GM12878 (cell line): ENCODE measurements at regions of chr2 and their contacts with region 1.

Region 1: GRCh38 chr2:150601280-150602038 is 114.0 kb upstream of the RND3 start:
- DNase-seq: no peak
- ATAC-seq: no peak; the same call in 2 of the 3 replicates
- H3K4me3 ChIP-seq: no peak overlapping the region
- H3K27ac ChIP-seq: no peak overlapping the region
- H3K4me1 ChIP-seq: no peaks in the 10 kb centered on the region
- H3K27me3 ChIP-seq: no peaks in the 10 kb centered on the region
- CTCF ChIP-seq: no peak
- EP300 ChIP-seq: no peak
- POLR2A ChIP-seq: no peak
- RAD21 ChIP-seq: no peak

Region 2: DNA sequence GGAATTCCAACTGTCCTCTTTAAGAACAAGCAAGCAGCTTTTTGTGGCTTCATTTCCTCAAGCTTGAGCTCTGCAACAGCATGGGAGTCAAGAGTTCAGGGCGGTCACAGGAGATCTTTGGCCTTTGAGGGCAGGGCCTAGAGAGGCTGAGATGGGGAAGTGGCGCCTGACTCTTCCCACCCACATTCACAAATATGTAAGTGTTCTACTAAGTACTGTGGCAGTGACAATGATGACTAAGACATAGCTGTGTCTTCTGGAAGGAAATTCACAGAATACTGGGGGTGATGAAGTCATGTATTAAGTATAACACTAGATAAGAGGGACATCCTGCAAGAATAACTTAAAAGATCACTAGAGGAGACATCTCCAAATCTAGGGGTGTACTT is 129.0 kb before region 1 on chr2:
- CTCF ChIA-PET with region 1: interaction called, 15 read pairs
- POLR2A ChIA-PET with region 1: interaction called, 3 read pairs
- RAD21 ChIA-PET with region 1: interaction called, 9 read pairs
- SMC1A ChIA-PET with region 1: interaction called, 10 read pairs
- in situ Hi-C with region 1: no loop called
- intact Hi-C with region 1: no loop called
- DNase-seq: no peak
- ATAC-seq: peak; percentile 85
- H3K4me3 ChIP-seq: no peak overlapping the region
- H3K27ac ChIP-seq: no peak overlapping the region
- H3K4me1 ChIP-seq: no peaks in the 10 kb centered on the region
- H3K27me3 ChIP-seq: no peaks in the 10 kb centered on the region; a peak in 1 of 4 replicates
- CTCF ChIP-seq: no peak
- EP300 ChIP-seq: peak in 1 of 2 experiments; percentile 26; a peak in 1 of 4 replicates
- POLR2A ChIP-seq: no peak
- RAD21 ChIP-seq: no peak

Region 3: DNA sequence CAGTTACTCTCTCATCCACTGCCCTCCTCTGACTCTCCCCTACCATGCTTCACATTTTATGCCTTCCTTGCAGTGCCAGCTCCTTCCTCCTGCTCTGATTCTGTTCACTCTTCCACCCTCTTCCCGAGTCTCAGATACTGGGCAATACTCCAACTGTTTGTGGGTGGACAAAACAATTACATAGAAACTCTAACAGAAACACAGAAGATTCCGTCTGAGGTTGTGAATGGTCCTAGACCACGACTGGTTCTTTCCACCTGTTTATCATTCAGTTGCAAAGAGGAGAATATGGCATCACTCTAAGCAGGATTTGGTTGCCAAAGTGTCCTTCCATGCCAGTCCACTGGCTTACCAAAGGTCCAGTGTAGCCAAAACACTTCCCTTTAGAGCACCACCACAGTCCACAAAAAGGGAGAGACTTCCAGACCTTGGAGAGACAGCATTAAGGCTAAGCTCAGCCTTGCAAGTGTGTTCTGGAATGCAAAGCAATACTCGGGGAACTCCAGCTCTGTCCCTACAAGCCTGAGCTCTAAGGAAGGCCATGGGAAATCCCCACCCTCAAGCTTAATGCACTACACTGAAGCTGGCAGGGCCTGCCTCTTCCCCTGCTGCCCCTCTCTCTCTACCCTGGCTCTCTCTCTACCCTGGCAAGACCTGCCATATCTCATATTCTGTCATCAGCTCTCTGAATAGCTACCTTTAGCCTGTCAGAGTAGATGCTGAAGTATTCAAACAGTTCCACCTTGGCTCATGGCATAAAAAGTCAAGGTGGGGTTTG is 80.4 kb before region 1 on chr2:
- CTCF ChIA-PET with region 1: interaction called, 29 read pairs
- POLR2A ChIA-PET with region 1: interaction called, 4 read pairs
- RAD21 ChIA-PET with region 1: interaction called, 40 read pairs
- SMC1A ChIA-PET with region 1: interaction called, 49 read pairs
- in situ Hi-C with region 1: no loop called
- intact Hi-C with region 1: no loop called
- DNase-seq: no peak
- ATAC-seq: peak; percentile 89
- H3K4me3 ChIP-seq: no peak overlapping the region
- H3K27ac ChIP-seq: no peak overlapping the region
- H3K4me1 ChIP-seq: no peaks in the 10 kb centered on the region
- H3K27me3 ChIP-seq: no peaks in the 10 kb centered on the region
- CTCF ChIP-seq: no peak
- EP300 ChIP-seq: no peak
- POLR2A ChIP-seq: no peak
- RAD21 ChIP-seq: no peak

Region 4: GRCh38 chr2:150548527-150548926 is 52.9 kb before region 1 on chr2:
- CTCF ChIA-PET with region 1: interaction called, 21 read pairs
- POLR2A ChIA-PET with region 1: interaction called, 3 read pairs
- RAD21 ChIA-PET with region 1: interaction called, 4 read pairs
- SMC1A ChIA-PET with region 1: interaction called, 22 read pairs
- in situ Hi-C with region 1: no loop called
- intact Hi-C with region 1: no loop called
- DNase-seq: no peak
- ATAC-seq: peak; percentile 80
- H3K4me3 ChIP-seq: no peak overlapping the region
- H3K27ac ChIP-seq: no peak overlapping the region
- H3K4me1 ChIP-seq: no peaks in the 10 kb centered on the region
- H3K27me3 ChIP-seq: no peaks in the 10 kb centered on the region
- CTCF ChIP-seq: peak; percentile 38 to 41 (median 38); a peak in 4 of 6 replicates
- EP300 ChIP-seq: no peak
- POLR2A ChIP-seq: no peak
- RAD21 ChIP-seq: 0 out of 2 replicates have a peak, but pooled peaks have one; percentile 6

Region 5: DNA sequence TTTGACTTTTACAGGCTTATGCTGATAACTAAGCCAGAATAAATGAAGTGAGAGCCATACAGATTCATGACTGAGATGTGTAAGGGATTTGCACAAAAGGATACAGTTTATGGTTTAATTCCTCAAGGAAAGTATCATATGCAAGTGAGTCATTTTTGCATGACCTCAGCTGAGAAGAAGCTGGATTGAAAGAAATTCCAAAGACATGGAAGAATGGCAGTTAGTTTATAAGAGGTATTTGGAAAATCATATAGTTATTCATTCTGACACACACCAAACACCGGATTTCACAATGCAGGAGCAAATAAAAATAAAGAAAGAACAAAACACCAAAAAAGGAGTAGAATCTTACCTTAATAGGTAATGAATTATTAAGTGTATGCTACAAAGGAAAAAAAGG is 30.7 kb before region 1 on chr2:
- CTCF ChIA-PET with region 1: interaction called, 7 read pairs
- POLR2A ChIA-PET with region 1: interaction called, 4 read pairs
- RAD21 ChIA-PET with region 1: interaction called, 22 read pairs
- SMC1A ChIA-PET with region 1: interaction called, 27 read pairs
- in situ Hi-C with region 1: no loop called
- intact Hi-C with region 1: no loop called
- DNase-seq: no peak
- ATAC-seq: no peak
- H3K4me3 ChIP-seq: no peak overlapping the region
- H3K27ac ChIP-seq: no peak overlapping the region
- H3K4me1 ChIP-seq: peaks cover 3% of the 10 kb centered on the region; the same call in 1 of the 2 replicates
- H3K27me3 ChIP-seq: no peaks in the 10 kb centered on the region
- CTCF ChIP-seq: no peak
- EP300 ChIP-seq: no peak
- POLR2A ChIP-seq: no peak
- RAD21 ChIP-seq: no peak

Region 6: GRCh38 chr2:150586858-150587257 is 14.6 kb before region 1 on chr2:
- CTCF ChIA-PET with region 1: interaction called, 40 read pairs
- POLR2A ChIA-PET with region 1: interaction called, 8 read pairs
- RAD21 ChIA-PET with region 1: interaction called, 41 read pairs
- SMC1A ChIA-PET with region 1: interaction called, 47 read pairs
- in situ Hi-C with region 1: no loop called
- intact Hi-C with region 1: no loop called
- DNase-seq: no peak
- ATAC-seq: peak; percentile 51
- H3K4me3 ChIP-seq: no peak overlapping the region
- H3K27ac ChIP-seq: no peak overlapping the region
- H3K4me1 ChIP-seq: no peaks in the 10 kb centered on the region
- H3K27me3 ChIP-seq: no peaks in the 10 kb centered on the region
- CTCF ChIP-seq: no peak
- EP300 ChIP-seq: no peak
- POLR2A ChIP-seq: no peak
- RAD21 ChIP-seq: no peak

Region 7: DNA sequence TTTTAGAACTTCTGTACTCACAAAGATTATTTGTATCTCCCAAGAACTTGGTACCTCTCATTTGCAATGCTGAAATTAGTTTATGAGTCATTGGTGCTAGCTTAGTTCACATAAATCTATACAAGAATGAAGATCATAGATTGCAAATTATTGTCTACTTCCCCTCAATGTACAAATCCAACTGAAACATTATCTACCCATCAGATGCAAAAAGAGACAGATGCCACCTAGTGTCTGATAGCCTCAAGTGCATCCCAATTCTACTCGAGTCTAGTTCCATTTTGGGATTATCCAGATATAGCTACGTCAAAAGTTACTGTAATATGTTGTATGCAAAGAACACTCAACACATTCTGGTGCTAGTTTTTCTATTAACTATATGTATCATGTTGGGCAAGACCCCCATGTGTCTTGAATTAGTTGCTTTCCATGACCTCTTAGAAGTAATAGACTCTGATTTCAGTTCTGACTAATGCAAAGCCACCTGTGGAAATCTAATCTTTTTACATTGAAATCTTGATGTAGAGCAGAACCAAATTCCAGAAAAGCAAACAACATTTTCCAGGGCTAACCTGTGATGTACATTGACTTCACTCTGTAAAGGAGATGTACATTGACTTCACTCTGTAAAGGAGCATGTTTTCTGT is 450.2 kb after region 1 on chr2:
- CTCF ChIA-PET with region 1: interaction called, 5 read pairs
- POLR2A ChIA-PET with region 1: no interaction called
- RAD21 ChIA-PET with region 1: no interaction called
- SMC1A ChIA-PET with region 1: interaction called, 17 read pairs
- in situ Hi-C with region 1: no loop called
- intact Hi-C with region 1: loop called (anchors 5 kb)
- DNase-seq: no peak
- ATAC-seq: peak; percentile 86
- H3K4me3 ChIP-seq: no peak overlapping the region
- H3K27ac ChIP-seq: no peak overlapping the region
- H3K4me1 ChIP-seq: no peaks in the 10 kb centered on the region
- H3K27me3 ChIP-seq: no peaks in the 10 kb centered on the region
- CTCF ChIP-seq: peak; percentile 67 to 81 (median 79)
- EP300 ChIP-seq: no peak
- POLR2A ChIP-seq: no peak
- RAD21 ChIP-seq: peak; percentile 72